Panc1 (cell line): ENCODE measurements at regions of chr3 and their contacts with region 1.

Region 1: GRCh38 chr3:20047341-20047779 is 7.1 kb downstream of the KAT2B start:
- DNase-seq: no peak
- ATAC-seq: no peak
- H3K4me3 ChIP-seq: no peak overlapping the region
- H3K27ac ChIP-seq: no peak overlapping the region
- H3K4me1 ChIP-seq: peaks cover 3% of the 10 kb centered on the region; the same call in 1 of the 2 replicates
- H3K27me3 ChIP-seq: no peaks in the 10 kb centered on the region
- CTCF ChIP-seq: no peak

Region 2: DNA sequence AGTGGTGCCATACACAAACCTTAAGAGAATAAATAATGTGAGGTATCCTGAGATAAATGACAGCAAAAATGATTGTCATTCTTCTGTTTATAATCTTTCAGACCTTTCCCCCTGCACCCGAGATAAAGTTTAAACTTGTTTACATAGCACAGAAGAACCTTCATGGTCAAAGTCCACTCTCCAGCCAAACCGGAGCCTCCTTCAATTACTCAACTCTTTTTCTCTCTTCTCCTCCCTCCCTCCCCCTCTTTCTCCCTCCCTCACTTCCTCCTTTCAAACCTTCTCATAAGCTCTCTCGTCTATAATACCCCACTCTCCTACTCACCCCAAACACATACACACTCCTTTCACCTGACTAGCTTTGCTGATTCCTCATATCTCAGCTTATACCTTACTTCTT is 312.2 kb before region 1 on chr3:
- CTCF ChIA-PET with region 1: no interaction called
- POLR2A ChIA-PET with region 1: no interaction called
- in situ Hi-C with region 1: no loop called
- intact Hi-C with region 1: no loop called
- DNase-seq: no peak
- ATAC-seq: no peak
- H3K4me3 ChIP-seq: no peak overlapping the region
- H3K27ac ChIP-seq: no peak overlapping the region
- H3K4me1 ChIP-seq: no peaks in the 10 kb centered on the region
- H3K27me3 ChIP-seq: no peaks in the 10 kb centered on the region
- CTCF ChIP-seq: no peak

Region 3: DNA sequence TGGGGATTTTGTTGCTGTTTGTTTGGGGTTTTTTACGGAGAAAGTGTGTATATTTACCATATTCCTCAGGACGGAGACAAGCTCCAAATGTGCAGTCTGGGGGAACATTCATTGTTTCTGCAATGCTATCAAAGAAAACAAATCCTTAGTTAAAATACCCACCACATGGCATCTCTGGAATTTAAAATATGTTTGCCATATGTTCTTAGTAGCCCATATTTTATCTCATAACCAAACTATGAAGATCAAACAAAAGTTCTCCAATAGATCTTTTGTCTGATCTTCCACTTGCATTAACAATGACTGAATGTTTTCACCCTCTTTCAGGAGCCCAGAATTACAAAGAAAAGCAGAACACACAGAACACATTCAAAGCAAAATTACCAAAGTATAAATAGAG is 148.6 kb before region 1 on chr3:
- CTCF ChIA-PET with region 1: no interaction called
- POLR2A ChIA-PET with region 1: no interaction called
- in situ Hi-C with region 1: no loop called
- intact Hi-C with region 1: no loop called
- DNase-seq: no peak
- ATAC-seq: peak; percentile 58; the same call in 1 of the 2 replicates
- H3K4me3 ChIP-seq: no peak overlapping the region
- H3K27ac ChIP-seq: no peak overlapping the region
- H3K4me1 ChIP-seq: peaks cover 6% of the 10 kb centered on the region; the same call in 1 of the 2 replicates
- H3K27me3 ChIP-seq: no peaks in the 10 kb centered on the region
- CTCF ChIP-seq: no peak

Region 4: GRCh38 chr3:20186599-20186964 is 139.2 kb after region 1 on chr3:
- CTCF ChIA-PET with region 1: no interaction called
- POLR2A ChIA-PET with region 1: no interaction called
- in situ Hi-C with region 1: no loop called
- intact Hi-C with region 1: no loop called
- DNase-seq: no peak
- ATAC-seq: no peak
- H3K4me3 ChIP-seq: peak overlapping the region; percentile 94 to 98
- H3K27ac ChIP-seq: peak overlapping the region; percentile 94
- H3K4me1 ChIP-seq: peaks cover 3% of the 10 kb centered on the region; the same call in 1 of the 2 replicates
- H3K27me3 ChIP-seq: no peaks in the 10 kb centered on the region
- CTCF ChIP-seq: no peak

Region 5: GRCh38 chr3:20375302-20375701 is 327.9 kb after region 1 on chr3:
- CTCF ChIA-PET with region 1: no interaction called
- POLR2A ChIA-PET with region 1: no interaction called
- in situ Hi-C with region 1: no loop called
- intact Hi-C with region 1: no loop called
- DNase-seq: no peak
- ATAC-seq: no peak
- H3K4me3 ChIP-seq: no peak overlapping the region
- H3K27ac ChIP-seq: no peak overlapping the region
- H3K4me1 ChIP-seq: no peaks in the 10 kb centered on the region
- H3K27me3 ChIP-seq: no peaks in the 10 kb centered on the region
- CTCF ChIP-seq: no peak

Region 6: GRCh38 chr3:21447476-21448151 is 1400.3 kb after region 1 on chr3:
- CTCF ChIA-PET with region 1: interaction called, 10 read pairs
- POLR2A ChIA-PET with region 1: no interaction called
- in situ Hi-C with region 1: no loop called
- intact Hi-C with region 1: no loop called
- DNase-seq: no peak
- ATAC-seq: no peak
- H3K4me3 ChIP-seq: no peak overlapping the region
- H3K27ac ChIP-seq: no peak overlapping the region
- H3K4me1 ChIP-seq: no peaks in the 10 kb centered on the region
- H3K27me3 ChIP-seq: no peaks in the 10 kb centered on the region
- CTCF ChIP-seq: no peak